Spleen (tissue), 13 donors: ENCODE measurements at regions of chr17 and their contacts with region 1.

Region 1: DNA sequence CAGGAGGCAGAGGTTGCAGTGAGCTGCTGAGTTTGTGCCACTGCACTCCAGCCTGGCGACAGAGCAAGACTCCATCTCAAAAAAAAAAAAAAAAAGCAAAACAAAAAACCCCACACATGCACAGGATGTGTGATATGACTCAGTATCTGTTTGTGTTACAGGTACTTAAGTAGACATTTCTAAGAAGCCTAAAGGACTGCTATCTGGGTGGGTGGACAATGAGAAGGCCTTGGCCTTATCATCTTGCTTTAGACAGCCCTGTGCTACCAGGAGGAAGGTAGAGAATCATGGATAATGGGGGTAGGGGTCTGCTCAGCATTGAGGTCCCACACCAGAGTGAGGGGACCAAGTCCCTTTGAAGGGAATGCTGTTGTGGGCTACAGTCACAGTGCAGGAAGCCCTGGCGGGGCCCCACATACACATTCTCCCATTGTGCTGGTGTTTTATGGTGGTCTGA is 26.7 kb downstream of the PLD6 start:
- DNase-seq: no peak
- H3K4me3 ChIP-seq: no peak overlapping the region
- H3K27ac ChIP-seq: peak overlapping the region; percentile 20 to 78 (median 49)
- H3K4me1 ChIP-seq: peaks cover 12 to 98% (median 48%) of the 10 kb centered on the region in 6 donors
- H3K27me3 ChIP-seq: no peaks in the 10 kb centered on the region
- CTCF ChIP-seq: no peak
- POLR2A ChIP-seq: no peak

Region 2: GRCh38 chr17:17237026-17237799 is 57.8 kb after region 1 on chr17 and contains the start of gene FLCN:
- intact Hi-C with region 1: loop called (anchors 10 kb)
- DNase-seq: peak; percentile 98
- H3K4me3 ChIP-seq: peak within 1 kb of the TSS; percentile 77 to 100 (median 97)
- H3K27ac ChIP-seq: peak within 1 kb of the TSS; percentile 91 to 100 (median 96)
- H3K4me1 ChIP-seq: peaks cover 19 to 56% (median 37%) of the 10 kb centered on the region in 6 donors
- H3K27me3 ChIP-seq: no peaks in the 10 kb centered on the region
- CTCF ChIP-seq: peak in 2 of 11 experiments; percentile 6 to 16
- POLR2A ChIP-seq: peak in 2 of 3 donors; percentile 38 to 74
- total RNA-seq, gene FLCN: 53.9 to 91.6 (median 81.5) TPM